Activated T-helper 2 cell treated with anti-CD3 and anti-CD28 coated beads, Interferon-gamma antibody, Interleukin-2, Interleukin-4, amounts not matched to agents 10 μg/mL and 5 μg/mL and 100 μg/mL, durations not matched to agents 14 hours and 24 hours and 36 hours (primary cell): ENCODE measurements at regions of chr7 and their contacts with region 1.

Region 1: DNA sequence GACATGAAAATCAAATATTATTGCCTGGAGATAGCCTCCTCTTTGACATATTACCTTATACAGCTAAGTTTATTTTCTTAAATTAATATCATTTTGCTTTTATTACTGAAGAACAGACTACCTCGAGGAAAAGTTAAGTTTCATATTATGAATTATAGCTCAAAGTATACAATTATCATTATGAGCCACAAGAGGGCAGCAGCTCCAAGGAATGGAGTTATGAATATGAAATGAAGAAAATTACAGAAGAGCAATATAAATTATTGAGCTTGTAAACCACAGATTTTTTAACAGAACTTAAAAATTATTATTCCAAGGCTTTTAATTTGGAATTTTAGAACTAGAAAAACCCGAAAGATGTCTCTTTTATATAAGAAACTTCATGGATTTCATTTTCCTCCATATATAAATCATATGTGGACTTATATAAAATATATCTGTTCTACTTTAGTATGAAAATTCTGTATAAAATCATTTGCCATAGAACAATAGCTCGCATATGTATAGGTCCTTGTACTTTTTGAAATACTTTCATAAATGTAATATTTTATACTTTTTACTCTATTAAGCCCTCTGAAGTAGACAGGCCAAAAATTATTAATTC is 40.1 kb downstream of the IQUB start:
- DNase-seq: no peak
- H3K4me3 Mint-ChIP-seq: no peak overlapping the region
- H3K27ac Mint-ChIP-seq: no peak overlapping the region
- H3K4me1 Mint-ChIP-seq: no peaks in the 10 kb centered on the region
- H3K27me3 Mint-ChIP-seq: peaks cover 1% of the 10 kb centered on the region

Region 2: GRCh38 chr7:123534383-123535260 is 40.3 kb after region 1 on chr7 and contains the start of gene IQUB:
- intact Hi-C with region 1: loop called (anchors 1 kb)
- DNase-seq: peak; percentile 88
- H3K4me3 Mint-ChIP-seq: peak within 1 kb of the TSS; percentile 88
- H3K27ac Mint-ChIP-seq: peak within 1 kb of the TSS; percentile 84
- H3K4me1 Mint-ChIP-seq: peaks cover 23% of the 10 kb centered on the region
- H3K27me3 Mint-ChIP-seq: peaks cover 17% of the 10 kb centered on the region
- total RNA-seq, gene IQUB: 0.25 TPM in 1 of 2 replicates, not detected in the other